ENCODE measurements at regions of chr4 and their contacts with region 1.

Region 1: DNA sequence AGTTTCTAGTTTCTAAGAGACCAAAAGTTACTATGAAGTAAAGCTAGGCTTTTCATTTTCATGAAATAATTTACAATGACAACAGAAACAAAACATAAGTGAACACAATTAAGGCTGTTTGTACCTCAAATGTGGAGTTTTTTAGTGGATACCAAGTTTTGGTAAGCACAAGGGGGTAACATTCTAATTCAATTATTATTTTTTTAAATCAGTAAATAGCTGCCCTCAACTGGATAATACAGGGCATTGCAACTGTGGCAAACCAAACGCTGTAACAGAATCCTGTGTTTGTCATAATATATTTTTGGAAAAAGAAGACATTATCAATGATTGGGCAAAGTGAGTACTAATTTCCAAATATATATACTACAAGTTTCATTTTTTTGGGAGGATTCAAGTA is 150.3 kb downstream of the FBXW7 start:
- DNase-seq: no peak
- ATAC-seq: peak in 1 of 4 donors; percentile 18
- H3K4me3 ChIP-seq: no peak overlapping the region
- H3K27ac ChIP-seq: no peak overlapping the region
- H3K4me1 ChIP-seq: peaks cover 0 to 21% (median 5%) of the 10 kb centered on the region in 12 donors
- H3K27me3 ChIP-seq: no peaks in the 10 kb centered on the region
- CTCF ChIP-seq: peak; percentile 40 to 83 (median 69)
- POLR2A ChIP-seq: no peak

Region 2: DNA sequence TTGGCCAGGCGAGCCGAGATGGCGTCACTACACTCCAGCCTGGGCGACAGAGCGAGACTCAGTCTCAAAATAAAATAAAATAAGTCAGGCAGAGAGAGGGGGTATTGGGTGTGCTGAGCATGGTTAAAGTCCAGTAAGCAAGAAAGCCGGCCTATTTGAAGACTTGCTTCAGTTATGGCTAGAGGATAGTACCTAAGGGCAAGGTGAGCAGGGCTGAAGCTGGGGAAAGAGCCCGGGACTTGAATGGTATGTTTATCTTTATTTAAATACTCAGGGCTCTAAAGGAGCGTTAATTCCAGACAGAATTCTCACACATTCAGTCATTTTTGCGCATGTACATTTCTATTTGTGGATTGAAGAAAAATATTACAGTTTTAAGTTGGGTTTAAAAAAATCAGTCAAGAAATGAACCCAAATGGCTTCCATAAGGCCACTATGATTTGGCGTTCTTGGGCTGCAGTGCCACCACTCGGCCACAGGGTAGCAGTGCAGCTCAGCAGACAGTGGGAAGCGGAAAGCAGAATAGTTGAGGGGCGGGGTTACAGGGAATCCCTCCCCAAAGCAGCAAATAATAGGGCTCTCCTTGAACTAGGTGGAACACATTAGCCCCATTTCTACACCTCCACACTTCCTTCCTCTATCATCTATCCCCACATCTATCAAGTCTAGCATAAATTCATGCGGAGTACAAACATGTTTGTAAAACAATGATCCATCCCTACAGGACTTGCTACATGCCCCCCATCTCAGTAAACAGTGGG is 1023.0 kb before region 1 on chr4:
- intact Hi-C with region 1: loop called in 1 of 10 experiments (anchors 10 kb)
- DNase-seq: peak; percentile 73 to 85 (median 79)
- ATAC-seq: peak; percentile 64 to 97 (median 96)
- H3K4me3 ChIP-seq: no peak overlapping the region
- H3K27ac ChIP-seq: no peak overlapping the region
- H3K4me1 ChIP-seq: peaks cover 0 to 4% (median 0%) of the 10 kb centered on the region in 12 donors
- H3K27me3 ChIP-seq: no peaks in the 10 kb centered on the region
- CTCF ChIP-seq: peak; percentile 93 to 100 (median 98)
- POLR2A ChIP-seq: no peak

Region 3: DNA sequence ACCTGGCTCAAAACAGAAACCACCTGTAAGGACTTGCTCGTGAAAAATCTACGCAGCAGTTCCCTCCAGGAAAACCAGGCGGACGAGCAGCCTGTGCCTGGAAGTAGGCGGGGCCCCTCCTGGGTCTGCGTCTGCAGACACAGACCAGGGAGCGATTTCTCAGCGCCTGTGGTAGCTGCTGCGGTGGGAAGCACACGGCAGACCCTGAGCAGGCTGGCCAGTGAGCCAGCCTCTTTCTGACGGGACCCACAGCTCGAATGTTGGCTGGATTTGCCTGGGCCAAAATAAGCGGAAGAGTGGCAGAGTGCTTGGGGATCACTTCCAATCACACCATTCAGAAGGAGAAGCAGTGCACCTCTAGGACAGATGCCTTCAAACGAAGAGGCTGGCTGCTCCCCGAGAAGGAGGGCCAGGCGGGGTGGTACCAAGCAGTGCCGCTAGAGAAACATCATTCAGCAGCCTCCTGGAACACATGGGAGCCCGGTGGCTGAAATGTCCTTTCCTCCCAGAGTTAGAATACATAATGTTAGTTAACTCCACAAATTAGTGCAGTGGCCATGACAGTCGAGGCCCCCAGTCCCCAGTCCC is 710.7 kb before region 1 on chr4:
- intact Hi-C with region 1: loop called in 1 of 10 experiments (anchors 10 kb)
- DNase-seq: peak in 3 of 5 donors; percentile 51 to 74 (median 61)
- ATAC-seq: peak; percentile 70 to 79 (median 72)
- H3K4me3 ChIP-seq: peak overlapping the region in 10 of 12 donors; percentile 10 to 48 (median 38)
- H3K27ac ChIP-seq: peak overlapping the region in 10 of 12 donors; percentile 23 to 76 (median 66)
- H3K4me1 ChIP-seq: peaks cover 0 to 57% (median 8%) of the 10 kb centered on the region in 12 donors
- H3K27me3 ChIP-seq: no peaks in the 10 kb centered on the region
- CTCF ChIP-seq: peak in 4 of 12 donors; percentile 13 to 36 (median 24)
- POLR2A ChIP-seq: no peak

Region 4: DNA sequence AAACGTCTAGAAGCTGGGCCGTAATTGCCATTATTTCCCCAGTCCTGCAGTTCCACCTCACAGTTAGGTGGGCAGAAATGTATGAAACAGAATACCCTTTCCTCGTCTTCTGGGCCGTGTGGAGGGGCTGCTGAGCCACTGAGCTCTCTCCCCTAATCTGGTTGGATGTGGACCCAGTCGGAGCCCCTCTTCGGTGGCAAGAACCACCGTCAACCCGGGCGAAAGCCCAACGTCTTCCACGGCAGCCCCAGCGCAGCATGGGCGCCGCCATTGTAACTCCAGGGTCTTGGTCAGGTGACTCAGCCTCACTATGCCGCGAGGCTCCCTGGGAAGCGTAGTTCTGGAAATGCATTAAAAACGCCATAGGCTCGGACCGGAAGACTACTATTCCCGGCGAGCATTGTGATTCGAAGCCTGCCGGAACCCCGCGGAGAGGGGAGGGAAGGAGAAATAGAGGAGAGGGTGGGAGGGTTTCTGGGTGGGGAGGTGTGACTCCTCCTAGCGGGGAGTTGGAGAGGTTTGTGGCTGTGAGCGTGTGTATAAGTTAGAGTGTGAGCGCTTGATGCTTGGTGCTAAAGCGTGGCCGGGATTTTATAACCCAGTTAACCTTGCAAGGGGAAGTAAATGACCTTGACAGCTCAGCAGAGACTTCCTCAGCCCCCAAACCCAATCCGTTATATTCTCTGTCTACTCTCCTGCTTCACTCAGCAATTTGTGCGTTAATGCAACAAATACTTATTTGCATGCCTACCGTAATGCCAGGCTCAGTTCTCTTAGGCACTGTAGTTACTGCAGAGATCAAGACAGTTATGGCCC is 624.6 kb before region 1 on chr4 and contains the start of gene GATB:
- intact Hi-C with region 1: loop called in 3 of 10 experiments (anchors 5 to 10 kb)
- DNase-seq: peak; percentile 94 to 96 (median 94)
- ATAC-seq: peak; percentile 99 to 100 (median 100)
- H3K4me3 ChIP-seq: peak within 1 kb of the TSS; percentile 57 to 91 (median 76)
- H3K27ac ChIP-seq: peak within 1 kb of the TSS; percentile 58 to 85 (median 79)
- H3K4me1 ChIP-seq: peaks cover 0 to 16% (median 7%) of the 10 kb centered on the region in 12 donors
- H3K27me3 ChIP-seq: no peaks in the 10 kb centered on the region
- CTCF ChIP-seq: peak; percentile 44 to 69 (median 54)
- POLR2A ChIP-seq: peak in 1 of 2 donors; percentile 52
- total RNA-seq, gene GATB: 60.7 to 122 (median 83.4) TPM

Region 5: GRCh38 chr4:151957153-151957552 is 428.4 kb before region 1 on chr4:
- intact Hi-C with region 1: loop called in 1 of 10 experiments (anchors 10 kb)
- DNase-seq: peak in 3 of 5 donors; percentile 20 to 38 (median 30)
- ATAC-seq: peak in 3 of 4 donors; percentile 32 to 62 (median 50)
- H3K4me3 ChIP-seq: no peak overlapping the region
- H3K27ac ChIP-seq: peak overlapping the region in 7 of 12 donors; percentile 28 to 75 (median 49)
- H3K4me1 ChIP-seq: peaks cover 0 to 30% (median 10%) of the 10 kb centered on the region in 12 donors
- H3K27me3 ChIP-seq: no peaks in the 10 kb centered on the region
- CTCF ChIP-seq: peak in 3 of 12 donors; percentile 7 to 31 (median 13)
- POLR2A ChIP-seq: no peak

Region 6: DNA sequence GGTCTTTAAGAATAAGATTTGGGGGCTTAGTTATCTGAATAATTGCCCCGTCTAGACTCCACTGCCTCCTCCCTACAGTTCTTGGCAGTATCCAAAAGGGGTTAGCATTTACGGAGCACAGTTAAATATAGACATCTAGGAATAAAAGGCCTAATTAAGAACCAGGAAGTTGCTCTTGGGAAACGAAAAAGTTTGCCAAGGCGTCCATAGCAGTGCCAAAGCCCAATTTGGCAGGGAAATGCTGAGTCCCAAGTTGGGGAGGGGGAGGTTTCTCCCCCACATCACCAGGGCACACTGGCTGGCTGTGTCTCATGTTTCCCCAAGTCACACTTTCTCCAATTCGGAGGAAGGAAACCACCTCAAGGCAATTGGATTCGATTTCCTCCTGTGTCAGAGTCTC is 188.3 kb before region 1 on chr4:
- intact Hi-C with region 1: no loop called
- DNase-seq: no peak
- ATAC-seq: peak; percentile 51 to 87 (median 74)
- H3K4me3 ChIP-seq: no peak overlapping the region
- H3K27ac ChIP-seq: peak overlapping the region in 8 of 12 donors; percentile 4 to 67 (median 50)
- H3K4me1 ChIP-seq: peaks cover 0 to 27% (median 13%) of the 10 kb centered on the region in 12 donors
- H3K27me3 ChIP-seq: no peaks in the 10 kb centered on the region
- CTCF ChIP-seq: peak in 1 of 12 donors; percentile 14
- POLR2A ChIP-seq: no peak